B cell (primary cell): ENCODE measurements at regions of chr18 and their contacts with region 1.

Region 1: GRCh38 chr18:2932247-2933181 is 80.4 kb downstream of the LPIN2 start:
- DNase-seq: peak; percentile 78
- ATAC-seq: peak; percentile 73
- H3K4me3 ChIP-seq: no peak overlapping the region
- H3K4me3 Mint-ChIP-seq: no peak overlapping the region
- H3K27ac ChIP-seq: no peak overlapping the region
- H3K27ac Mint-ChIP-seq: peak overlapping the region; percentile 64
- H3K4me1 ChIP-seq: peaks cover 0 to 4% of the 10 kb centered on the region in 2 donors
- H3K4me1 Mint-ChIP-seq: peaks cover 8% of the 10 kb centered on the region
- H3K27me3 ChIP-seq: no peaks in the 10 kb centered on the region
- H3K27me3 Mint-ChIP-seq: no peaks in the 10 kb centered on the region
- CTCF ChIP-seq: peak; percentile 92

Region 2: GRCh38 chr18:2431806-2432205 is 500.7 kb before region 1 on chr18:
- CTCF ChIA-PET with region 1: no interaction called
- POLR2A ChIA-PET with region 1: no interaction called
- intact Hi-C with region 1: no loop called
- DNase-seq: no peak
- ATAC-seq: no peak
- H3K4me3 ChIP-seq: no peak overlapping the region
- H3K4me3 Mint-ChIP-seq: no peak overlapping the region
- H3K27ac ChIP-seq: no peak overlapping the region
- H3K27ac Mint-ChIP-seq: no peak overlapping the region
- H3K4me1 ChIP-seq: no peaks in the 10 kb centered on the region
- H3K4me1 Mint-ChIP-seq: no peaks in the 10 kb centered on the region
- H3K27me3 ChIP-seq: no peaks in the 10 kb centered on the region
- H3K27me3 Mint-ChIP-seq: peaks cover 17% of the 10 kb centered on the region
- CTCF ChIP-seq: no peak

Region 3: DNA sequence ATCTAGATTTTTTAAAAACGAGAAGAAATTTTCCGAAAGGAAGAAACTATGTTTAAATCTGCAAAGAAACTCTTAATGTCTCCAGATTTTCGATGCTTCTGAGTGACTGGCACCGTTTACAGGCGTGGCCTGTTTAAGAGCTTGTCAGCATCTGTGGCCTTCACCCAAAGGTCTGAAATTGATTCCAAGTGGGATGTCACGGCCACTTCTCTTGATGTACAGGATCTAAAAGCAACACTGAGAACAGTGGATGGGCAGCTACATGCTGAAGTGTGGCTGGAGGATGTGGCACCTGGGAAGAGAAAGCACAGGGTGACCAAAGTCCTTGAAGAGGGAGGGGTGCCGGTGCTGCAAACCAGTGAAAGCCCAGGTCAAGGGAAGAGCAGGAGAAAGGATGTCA is 57.7 kb before region 1 on chr18:
- CTCF ChIA-PET with region 1: no interaction called
- POLR2A ChIA-PET with region 1: no interaction called
- intact Hi-C with region 1: no loop called
- DNase-seq: no peak
- ATAC-seq: no peak
- H3K4me3 ChIP-seq: no peak overlapping the region
- H3K4me3 Mint-ChIP-seq: no peak overlapping the region
- H3K27ac ChIP-seq: no peak overlapping the region
- H3K27ac Mint-ChIP-seq: no peak overlapping the region
- H3K4me1 ChIP-seq: no peaks in the 10 kb centered on the region
- H3K4me1 Mint-ChIP-seq: no peaks in the 10 kb centered on the region
- H3K27me3 ChIP-seq: peaks cover 0 to 5% (median 2%) of the 10 kb centered on the region in 4 experiments
- H3K27me3 Mint-ChIP-seq: peaks cover 11% of the 10 kb centered on the region
- CTCF ChIP-seq: no peak

Region 4: GRCh38 chr18:2917259-2918047 is 15.1 kb before region 1 on chr18:
- CTCF ChIA-PET with region 1: interaction called, 10 read pairs
- POLR2A ChIA-PET with region 1: no interaction called
- intact Hi-C with region 1: no loop called
- DNase-seq: peak; percentile 60
- ATAC-seq: peak; percentile 86
- H3K4me3 ChIP-seq: peak overlapping the region in 2 of 5 experiments; percentile 20 to 34
- H3K4me3 Mint-ChIP-seq: peak overlapping the region; percentile 79
- H3K27ac ChIP-seq: peak overlapping the region; percentile 55 to 74
- H3K27ac Mint-ChIP-seq: peak overlapping the region; percentile 92
- H3K4me1 ChIP-seq: peaks cover 21 to 26% of the 10 kb centered on the region in 2 donors
- H3K4me1 Mint-ChIP-seq: peaks cover 38% of the 10 kb centered on the region
- H3K27me3 ChIP-seq: no peaks in the 10 kb centered on the region
- H3K27me3 Mint-ChIP-seq: no peaks in the 10 kb centered on the region
- CTCF ChIP-seq: no peak

Region 5: GRCh38 chr18:2971741-2972552 is 39.4 kb after region 1 on chr18:
- CTCF ChIA-PET with region 1: interaction called, 10 read pairs
- POLR2A ChIA-PET with region 1: no interaction called
- intact Hi-C with region 1: no loop called
- DNase-seq: peak; percentile 86
- ATAC-seq: peak; percentile 81
- H3K4me3 ChIP-seq: peak overlapping the region; percentile 18 to 58 (median 47)
- H3K4me3 Mint-ChIP-seq: peak overlapping the region; percentile 88
- H3K27ac ChIP-seq: peak overlapping the region; percentile 89 to 91
- H3K27ac Mint-ChIP-seq: peak overlapping the region; percentile 96
- H3K4me1 ChIP-seq: peaks cover 64 to 66% of the 10 kb centered on the region in 2 donors
- H3K4me1 Mint-ChIP-seq: peaks cover 70% of the 10 kb centered on the region
- H3K27me3 ChIP-seq: no peaks in the 10 kb centered on the region
- H3K27me3 Mint-ChIP-seq: no peaks in the 10 kb centered on the region
- CTCF ChIP-seq: no peak

Region 6: GRCh38 chr18:2978646-2979045 is 46.1 kb after region 1 on chr18:
- CTCF ChIA-PET with region 1: interaction called, 255 read pairs
- POLR2A ChIA-PET with region 1: interaction called, 3 read pairs
- intact Hi-C with region 1: no loop called
- DNase-seq: peak; percentile 35
- ATAC-seq: no peak
- H3K4me3 ChIP-seq: peak overlapping the region in 2 of 5 experiments; percentile 5 to 46
- H3K4me3 Mint-ChIP-seq: peak overlapping the region; percentile 77
- H3K27ac ChIP-seq: peak overlapping the region; percentile 78 to 91
- H3K27ac Mint-ChIP-seq: peak overlapping the region; percentile 94
- H3K4me1 ChIP-seq: peaks cover 58 to 61% of the 10 kb centered on the region in 2 donors
- H3K4me1 Mint-ChIP-seq: peaks cover 67% of the 10 kb centered on the region
- H3K27me3 ChIP-seq: no peaks in the 10 kb centered on the region
- H3K27me3 Mint-ChIP-seq: no peaks in the 10 kb centered on the region
- CTCF ChIP-seq: no peak

Region 7: GRCh38 chr18:3129053-3129864 is 196.7 kb after region 1 on chr18:
- CTCF ChIA-PET with region 1: interaction called, 32 read pairs
- POLR2A ChIA-PET with region 1: no interaction called
- intact Hi-C with region 1: loop called (anchors 1 kb)
- DNase-seq: peak; percentile 80
- ATAC-seq: peak; percentile 98
- H3K4me3 ChIP-seq: no peak overlapping the region
- H3K4me3 Mint-ChIP-seq: peak overlapping the region; percentile 4
- H3K27ac ChIP-seq: no peak overlapping the region
- H3K27ac Mint-ChIP-seq: no peak overlapping the region
- H3K4me1 ChIP-seq: peaks cover 0 to 4% of the 10 kb centered on the region in 2 donors
- H3K4me1 Mint-ChIP-seq: peaks cover 6% of the 10 kb centered on the region
- H3K27me3 ChIP-seq: no peaks in the 10 kb centered on the region
- H3K27me3 Mint-ChIP-seq: no peaks in the 10 kb centered on the region
- CTCF ChIP-seq: peak; percentile 89